Activated B cell treated with CpG ODN at 0.5 μM for 24 hours (primary cell): ENCODE measurements at regions of chr17 and their contacts with region 1.

Region 1: GRCh38 chr17:28726226-28727130 is at the start of gene TLCD1:
- DNase-seq: peak; percentile 87
- ATAC-seq: peak; percentile 40
- H3K4me3 Mint-ChIP-seq: peak within 1 kb of the TSS; percentile 95
- H3K27ac Mint-ChIP-seq: peak within 1 kb of the TSS; percentile 99
- H3K4me1 Mint-ChIP-seq: peaks cover 70% of the 10 kb centered on the region
- H3K27me3 Mint-ChIP-seq: no peaks in the 10 kb centered on the region
- CTCF ChIP-seq: peak; percentile 78
- total RNA-seq, gene TLCD1: 40.7 and 41.0 TPM in 2 replicates

Region 2: DNA sequence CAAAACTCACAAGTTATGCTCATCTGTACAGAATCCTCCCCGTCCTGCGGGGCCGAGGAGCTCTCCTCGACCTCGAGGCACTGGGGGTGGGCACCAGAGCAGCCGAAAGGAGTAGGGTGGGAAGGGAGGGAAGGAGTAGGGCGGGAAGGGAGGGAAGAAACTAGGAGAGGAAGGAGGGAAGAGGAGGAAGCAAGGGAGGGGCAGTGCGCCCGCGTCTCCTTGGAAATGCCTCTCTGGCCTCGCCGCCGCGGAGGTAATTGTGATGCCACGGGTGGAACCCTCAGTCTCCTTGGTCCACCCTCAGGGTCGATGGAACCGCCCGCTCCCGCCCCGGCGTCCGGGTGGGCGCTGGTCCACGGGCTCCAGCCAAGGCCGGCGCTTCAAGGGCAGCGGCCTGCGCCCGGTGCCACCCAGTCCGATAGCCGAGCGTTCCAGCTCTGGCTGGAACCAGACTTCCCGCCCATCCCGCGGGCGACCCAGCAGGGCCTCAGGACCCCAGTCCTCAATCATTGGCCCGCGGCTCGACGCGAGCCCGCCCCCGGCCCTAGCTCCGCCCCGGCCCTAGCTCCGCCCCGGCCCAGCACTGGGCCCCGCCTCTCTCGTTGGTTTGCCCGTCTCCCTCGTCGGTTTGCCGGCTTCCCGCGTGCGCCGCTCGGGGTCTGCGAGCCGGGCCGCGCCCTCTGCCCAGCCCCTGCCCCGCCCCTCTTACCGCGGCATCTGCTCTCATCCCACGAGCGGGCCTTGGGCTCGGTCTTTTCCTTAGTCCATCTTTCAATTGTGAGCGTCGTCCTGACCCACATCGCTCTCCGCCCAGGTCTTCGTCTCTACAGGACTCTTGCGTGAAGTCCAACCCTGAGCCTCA is 15.4 kb before region 1 on chr17:
- CTCF ChIA-PET with region 1: interaction called, 15 read pairs
- POLR2A ChIA-PET with region 1: interaction called, 115 read pairs
- intact Hi-C with region 1: loop called (anchors 1 kb)
- DNase-seq: peak; percentile 94
- ATAC-seq: peak; percentile 89
- H3K4me3 Mint-ChIP-seq: peak overlapping the region; percentile 91
- H3K27ac Mint-ChIP-seq: peak overlapping the region; percentile 96
- H3K4me1 Mint-ChIP-seq: peaks cover 18% of the 10 kb centered on the region
- H3K27me3 Mint-ChIP-seq: no peaks in the 10 kb centered on the region
- CTCF ChIP-seq: no peak

Region 3: DNA sequence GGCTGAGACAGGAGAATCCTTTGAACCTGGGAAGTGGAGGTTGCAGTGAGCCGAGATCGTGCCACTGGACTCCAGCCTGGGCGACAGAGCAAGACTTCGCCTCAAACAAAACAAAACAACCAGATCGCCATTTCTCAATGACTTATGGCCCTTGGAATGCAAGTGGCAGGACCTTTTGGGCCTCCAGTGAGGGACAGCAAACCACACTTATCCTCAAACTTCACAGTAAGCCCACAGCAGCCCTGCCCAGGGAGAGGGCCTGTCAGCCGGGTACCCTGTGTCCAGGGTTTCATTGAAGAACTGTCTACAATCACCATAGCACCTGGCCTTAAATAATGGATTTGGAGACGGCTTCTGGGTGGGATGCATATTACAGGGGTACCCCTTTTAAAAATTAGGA is 29.0 kb after region 1 on chr17:
- CTCF ChIA-PET with region 1: interaction called, 545 read pairs
- POLR2A ChIA-PET with region 1: interaction called, 2,384 read pairs
- intact Hi-C with region 1: loop called (anchors 1 kb)
- DNase-seq: no peak
- ATAC-seq: no peak
- H3K4me3 Mint-ChIP-seq: no peak overlapping the region
- H3K27ac Mint-ChIP-seq: peak overlapping the region; percentile 18
- H3K4me1 Mint-ChIP-seq: peaks cover 8% of the 10 kb centered on the region
- H3K27me3 Mint-ChIP-seq: no peaks in the 10 kb centered on the region
- CTCF ChIP-seq: no peak

Region 4: DNA sequence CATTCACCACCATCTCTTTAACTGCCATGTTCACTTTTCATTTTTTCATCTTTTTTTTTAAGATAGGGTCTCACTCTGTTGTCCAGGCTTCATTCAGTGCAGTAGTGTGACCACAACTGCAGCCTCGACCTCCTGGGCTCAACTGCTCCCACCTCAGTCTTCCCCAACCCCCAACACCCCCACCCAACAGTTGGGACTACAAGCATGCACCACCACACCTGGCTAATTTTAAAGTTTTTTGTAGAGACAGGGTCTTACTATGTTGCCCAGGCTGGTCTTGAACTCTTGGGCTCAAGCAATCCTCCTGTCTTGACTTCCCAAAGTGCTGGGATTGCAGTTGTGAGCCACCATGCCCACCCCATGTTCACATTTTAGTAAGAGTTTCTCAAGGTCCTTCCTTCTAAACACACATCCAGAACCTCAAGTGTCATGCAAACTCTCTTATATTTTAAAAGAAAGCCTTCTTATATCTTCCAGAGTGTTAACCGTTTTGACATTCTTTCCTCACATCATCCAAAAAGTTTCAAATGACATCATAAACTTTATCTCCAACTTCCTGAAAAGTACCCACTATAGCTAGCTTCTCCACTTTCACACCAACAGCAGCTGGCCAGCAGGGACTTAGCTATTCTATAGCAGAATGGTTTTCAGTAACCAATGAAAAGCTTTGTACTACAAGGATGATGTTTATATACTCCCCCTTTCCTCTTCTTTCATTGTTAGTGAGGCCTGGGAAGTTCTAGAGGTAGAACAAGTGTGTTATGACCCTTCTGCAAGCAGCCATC is 66.6 kb after region 1 on chr17:
- CTCF ChIA-PET with region 1: no interaction called
- POLR2A ChIA-PET with region 1: no interaction called
- intact Hi-C with region 1: no loop called
- DNase-seq: no peak
- ATAC-seq: no peak
- H3K4me3 Mint-ChIP-seq: no peak overlapping the region
- H3K27ac Mint-ChIP-seq: no peak overlapping the region
- H3K4me1 Mint-ChIP-seq: no peaks in the 10 kb centered on the region
- H3K27me3 Mint-ChIP-seq: no peaks in the 10 kb centered on the region
- CTCF ChIP-seq: no peak

Region 5: GRCh38 chr17:28842282-28843012 is 116.0 kb after region 1 on chr17 and contains the start of gene FAM222B:
- CTCF ChIA-PET with region 1: interaction called, 10 read pairs
- POLR2A ChIA-PET with region 1: interaction called, 19 read pairs
- intact Hi-C with region 1: loop called (anchors 1 kb)
- DNase-seq: peak; percentile 84
- ATAC-seq: peak; percentile 98
- H3K4me3 Mint-ChIP-seq: peak within 1 kb of the TSS; percentile 96
- H3K27ac Mint-ChIP-seq: peak within 1 kb of the TSS; percentile 91
- H3K4me1 Mint-ChIP-seq: peaks cover 24% of the 10 kb centered on the region
- H3K27me3 Mint-ChIP-seq: no peaks in the 10 kb centered on the region
- CTCF ChIP-seq: no peak
- total RNA-seq, gene FAM222B: 15.6 and 16.0 TPM in 2 replicates

Region 6: DNA sequence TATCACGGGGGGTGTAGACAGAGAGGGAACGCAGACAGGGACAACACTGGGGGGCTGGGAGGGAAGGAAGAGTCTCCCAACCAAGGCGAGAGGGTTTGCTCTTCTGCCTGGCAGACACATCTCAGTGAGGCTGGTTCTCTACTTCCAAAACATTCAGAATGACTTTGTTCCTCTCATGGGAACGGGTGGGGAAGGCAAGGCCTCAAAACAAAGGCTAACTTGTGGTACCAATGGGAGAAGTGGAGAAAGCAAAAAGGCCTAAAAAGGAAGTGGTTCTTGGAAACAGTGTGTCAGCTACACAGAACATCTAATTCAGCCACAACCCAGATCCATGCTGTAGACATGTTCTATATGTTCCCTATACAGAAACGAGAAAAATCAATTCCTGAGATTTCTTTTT is 163.5 kb after region 1 on chr17:
- CTCF ChIA-PET with region 1: interaction called, 3 read pairs
- POLR2A ChIA-PET with region 1: interaction called, 48 read pairs
- intact Hi-C with region 1: no loop called
- DNase-seq: no peak
- ATAC-seq: no peak
- H3K4me3 Mint-ChIP-seq: peak overlapping the region; percentile 35
- H3K27ac Mint-ChIP-seq: peak overlapping the region; percentile 65
- H3K4me1 Mint-ChIP-seq: peaks cover 86% of the 10 kb centered on the region
- H3K27me3 Mint-ChIP-seq: no peaks in the 10 kb centered on the region
- CTCF ChIP-seq: no peak

Region 7: GRCh38 chr17:28916302-28916934 is 189.9 kb after region 1 on chr17:
- CTCF ChIA-PET with region 1: interaction called, 28 read pairs
- POLR2A ChIA-PET with region 1: interaction called, 15 read pairs
- intact Hi-C with region 1: loop called (anchors 1 kb)
- DNase-seq: no peak
- ATAC-seq: peak; percentile 90
- H3K4me3 Mint-ChIP-seq: no peak overlapping the region
- H3K27ac Mint-ChIP-seq: peak overlapping the region; percentile 35
- H3K4me1 Mint-ChIP-seq: no peaks in the 10 kb centered on the region
- H3K27me3 Mint-ChIP-seq: no peaks in the 10 kb centered on the region
- CTCF ChIP-seq: peak; percentile 52

Region 8: GRCh38 chr17:29891131-29891530 is 1164.7 kb after region 1 on chr17:
- CTCF ChIA-PET with region 1: no interaction called
- POLR2A ChIA-PET with region 1: no interaction called
- intact Hi-C with region 1: no loop called
- DNase-seq: no peak
- ATAC-seq: no peak
- H3K4me3 Mint-ChIP-seq: no peak overlapping the region
- H3K27ac Mint-ChIP-seq: no peak overlapping the region
- H3K4me1 Mint-ChIP-seq: peaks cover 24% of the 10 kb centered on the region
- H3K27me3 Mint-ChIP-seq: no peaks in the 10 kb centered on the region
- CTCF ChIP-seq: no peak